Activated B cell treated with CpG ODN at 0.5 μM for 24 hours (primary cell): ENCODE measurements at regions of chr14 and their contacts with region 1.

Region 1: DNA sequence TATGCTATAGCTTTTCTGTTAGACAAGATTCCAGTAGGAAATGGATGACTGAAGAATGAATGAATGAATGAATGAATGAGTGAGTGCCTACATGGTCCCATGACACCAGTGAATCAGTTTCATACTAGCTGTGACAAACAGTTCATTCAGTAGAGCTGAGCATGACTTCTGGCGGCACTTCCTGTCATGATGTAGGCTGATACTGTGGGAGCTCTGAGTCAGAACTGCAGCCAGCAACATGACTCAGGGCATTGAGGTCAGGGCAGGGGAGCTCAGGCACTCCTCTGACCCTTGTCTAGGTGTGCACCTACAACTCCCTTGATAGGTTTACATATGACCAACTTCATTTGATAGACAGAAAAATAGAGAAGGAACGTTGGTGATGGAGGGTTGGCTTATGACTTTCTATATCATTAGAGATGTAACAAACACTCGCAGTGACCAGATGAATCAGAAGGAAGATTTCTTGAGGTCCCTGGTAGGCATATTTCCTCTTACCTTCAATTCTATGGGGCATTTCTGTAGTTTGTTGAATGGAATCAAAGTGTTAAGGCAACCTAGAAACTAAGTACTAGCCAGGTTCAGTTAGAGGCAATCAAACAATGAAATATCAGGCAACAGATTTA is 139.3 kb upstream of the ARHGAP5 start:
- DNase-seq: no peak
- ATAC-seq: peak; percentile 98
- H3K4me3 Mint-ChIP-seq: no peak overlapping the region
- H3K27ac Mint-ChIP-seq: peak overlapping the region; percentile 42
- H3K4me1 Mint-ChIP-seq: peaks cover 7% of the 10 kb centered on the region
- H3K27me3 Mint-ChIP-seq: no peaks in the 10 kb centered on the region
- CTCF ChIP-seq: no peak

Region 2: DNA sequence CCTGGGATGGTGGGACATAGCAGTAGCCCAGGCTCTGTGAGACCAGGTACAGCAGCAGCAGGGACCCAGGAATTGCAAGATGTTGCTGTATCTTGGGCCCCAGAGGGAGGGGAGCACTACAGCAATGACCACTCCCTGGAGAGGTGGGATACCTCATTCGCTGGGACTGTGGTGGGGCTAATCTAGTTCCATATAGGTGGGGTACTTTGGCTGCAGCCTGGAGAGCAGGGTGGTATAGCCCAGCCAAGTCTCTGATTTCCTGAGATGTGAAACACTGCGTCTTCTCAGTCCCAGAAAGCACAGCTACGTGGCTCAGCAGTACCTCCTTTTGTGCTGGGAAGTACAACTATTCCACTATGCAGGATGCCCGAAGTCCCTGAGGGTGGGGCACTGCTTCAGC is 24.5 kb before region 1 on chr14:
- CTCF ChIA-PET with region 1: no interaction called
- POLR2A ChIA-PET with region 1: no interaction called
- intact Hi-C with region 1: no loop called
- DNase-seq: no peak
- ATAC-seq: no peak
- H3K4me3 Mint-ChIP-seq: no peak overlapping the region
- H3K27ac Mint-ChIP-seq: no peak overlapping the region
- H3K4me1 Mint-ChIP-seq: no peaks in the 10 kb centered on the region
- H3K27me3 Mint-ChIP-seq: no peaks in the 10 kb centered on the region
- CTCF ChIP-seq: no peak

Region 3: DNA sequence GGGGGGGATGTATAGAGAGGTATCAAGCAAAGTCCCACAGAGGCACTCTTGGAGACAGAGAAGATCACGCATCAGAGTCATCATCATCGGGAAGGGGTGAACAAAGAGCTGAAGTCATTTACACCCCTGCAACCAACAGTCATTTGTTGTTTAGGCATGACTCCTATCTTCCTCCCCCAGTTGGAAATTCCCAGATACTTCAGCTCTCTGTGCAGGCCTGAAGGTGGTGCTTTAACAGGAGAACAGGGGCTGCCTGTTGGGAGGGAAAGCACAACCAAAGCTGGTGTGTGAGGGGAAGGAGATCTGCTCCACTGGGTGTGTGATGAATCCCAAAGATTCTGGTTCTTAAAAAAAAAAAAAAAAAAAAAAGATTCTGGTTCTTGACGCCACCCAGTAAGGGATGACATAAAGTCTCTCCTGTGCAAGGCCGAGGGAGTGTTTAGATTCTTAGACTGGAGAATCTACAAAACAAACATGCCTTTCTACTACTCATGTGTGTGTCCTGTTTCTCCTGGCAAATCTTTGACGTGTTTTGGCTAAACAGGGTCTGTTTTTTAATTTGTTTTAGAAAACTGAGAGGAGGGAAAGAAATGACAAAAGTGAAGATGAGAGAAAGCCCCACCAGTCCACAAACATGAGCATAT is 18.2 kb after region 1 on chr14:
- CTCF ChIA-PET with region 1: no interaction called
- POLR2A ChIA-PET with region 1: no interaction called
- intact Hi-C with region 1: no loop called
- DNase-seq: no peak
- ATAC-seq: no peak
- H3K4me3 Mint-ChIP-seq: no peak overlapping the region
- H3K27ac Mint-ChIP-seq: no peak overlapping the region
- H3K4me1 Mint-ChIP-seq: no peaks in the 10 kb centered on the region
- H3K27me3 Mint-ChIP-seq: peaks cover 4% of the 10 kb centered on the region
- CTCF ChIP-seq: no peak

Region 4: GRCh38 chr14:32047791-32048190 is 110.0 kb after region 1 on chr14:
- CTCF ChIA-PET with region 1: no interaction called
- POLR2A ChIA-PET with region 1: interaction called, 3 read pairs
- intact Hi-C with region 1: loop called (anchors 5 kb)
- DNase-seq: no peak
- ATAC-seq: no peak
- H3K4me3 Mint-ChIP-seq: no peak overlapping the region
- H3K27ac Mint-ChIP-seq: no peak overlapping the region
- H3K4me1 Mint-ChIP-seq: peaks cover 36% of the 10 kb centered on the region
- H3K27me3 Mint-ChIP-seq: peaks cover 5% of the 10 kb centered on the region
- CTCF ChIP-seq: no peak

Region 5: GRCh38 chr14:32059702-32060101 is 121.9 kb after region 1 on chr14:
- CTCF ChIA-PET with region 1: no interaction called
- POLR2A ChIA-PET with region 1: no interaction called
- intact Hi-C with region 1: no loop called
- DNase-seq: no peak
- ATAC-seq: no peak
- H3K4me3 Mint-ChIP-seq: no peak overlapping the region
- H3K27ac Mint-ChIP-seq: no peak overlapping the region
- H3K4me1 Mint-ChIP-seq: no peaks in the 10 kb centered on the region
- H3K27me3 Mint-ChIP-seq: peaks cover 3% of the 10 kb centered on the region
- CTCF ChIP-seq: no peak